HEK293 (cell line): ENCODE measurements at regions of chr17 and their contacts with region 1.

Region 1: GRCh38 chr17:38861399-38861843 is 7.9 kb upstream of the RPL23 start:
- H3K4me3 ChIP-seq: no peak overlapping the region
- H3K27ac ChIP-seq: no peak overlapping the region
- H3K4me1 ChIP-seq: no peaks in the 10 kb centered on the region
- CTCF ChIP-seq: no peak

Region 2: GRCh38 chr17:38848557-38848891 is 12.9 kb before region 1 on chr17:
- CTCF ChIA-PET with region 1: interaction called, 4 read pairs
- POLR2A ChIA-PET with region 1: interaction called, 13 read pairs
- H3K4me3 ChIP-seq: no peak overlapping the region
- H3K27ac ChIP-seq: no peak overlapping the region
- H3K4me1 ChIP-seq: peaks cover 3% of the 10 kb centered on the region
- CTCF ChIP-seq: no peak

Region 3: DNA sequence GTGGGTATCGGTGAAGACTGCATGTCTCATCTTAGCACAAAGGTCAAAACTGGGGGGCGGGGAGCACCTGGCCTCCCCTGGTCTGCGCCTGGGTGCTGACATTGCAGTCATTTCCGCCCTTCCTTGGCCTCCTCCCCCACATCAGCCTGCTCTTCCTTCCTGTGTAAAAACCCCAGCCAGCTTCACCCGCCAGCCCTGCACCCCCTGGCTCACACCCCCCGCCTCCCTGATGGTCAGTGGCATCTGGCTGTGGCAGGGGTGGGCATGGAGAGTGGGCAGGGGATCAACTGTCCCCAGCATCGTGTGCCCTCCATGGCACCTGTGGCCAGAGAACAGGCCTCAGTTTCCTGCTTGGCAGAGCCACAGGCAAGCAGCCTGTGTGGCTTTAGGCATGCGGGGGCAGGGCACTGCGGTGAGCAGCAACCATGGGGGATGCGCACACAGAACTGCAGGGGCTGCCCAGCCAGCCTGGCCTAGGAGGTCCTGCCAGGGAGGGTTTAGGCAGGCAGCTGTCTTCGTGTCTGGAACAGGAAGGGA is 37.5 kb after region 1 on chr17:
- CTCF ChIA-PET with region 1: no interaction called
- POLR2A ChIA-PET with region 1: interaction called, 10 read pairs
- H3K4me3 ChIP-seq: no peak overlapping the region
- H3K27ac ChIP-seq: no peak overlapping the region
- H3K4me1 ChIP-seq: peaks cover 8% of the 10 kb centered on the region; the same call in 1 of the 2 replicates
- CTCF ChIP-seq: no peak

Region 4: GRCh38 chr17:38922538-38923297 is 61.3 kb after region 1 on chr17:
- CTCF ChIA-PET with region 1: no interaction called
- POLR2A ChIA-PET with region 1: no interaction called
- H3K4me3 ChIP-seq: no peak overlapping the region
- H3K27ac ChIP-seq: no peak overlapping the region
- H3K4me1 ChIP-seq: no peaks in the 10 kb centered on the region; the same call in 1 of the 2 replicates
- CTCF ChIP-seq: no peak

Region 5: GRCh38 chr17:38943607-38944006 is 82.2 kb after region 1 on chr17:
- CTCF ChIA-PET with region 1: no interaction called
- POLR2A ChIA-PET with region 1: no interaction called
- H3K4me3 ChIP-seq: no peak overlapping the region
- H3K27ac ChIP-seq: no peak overlapping the region
- H3K4me1 ChIP-seq: no peaks in the 10 kb centered on the region
- CTCF ChIP-seq: no peak

Region 6: DNA sequence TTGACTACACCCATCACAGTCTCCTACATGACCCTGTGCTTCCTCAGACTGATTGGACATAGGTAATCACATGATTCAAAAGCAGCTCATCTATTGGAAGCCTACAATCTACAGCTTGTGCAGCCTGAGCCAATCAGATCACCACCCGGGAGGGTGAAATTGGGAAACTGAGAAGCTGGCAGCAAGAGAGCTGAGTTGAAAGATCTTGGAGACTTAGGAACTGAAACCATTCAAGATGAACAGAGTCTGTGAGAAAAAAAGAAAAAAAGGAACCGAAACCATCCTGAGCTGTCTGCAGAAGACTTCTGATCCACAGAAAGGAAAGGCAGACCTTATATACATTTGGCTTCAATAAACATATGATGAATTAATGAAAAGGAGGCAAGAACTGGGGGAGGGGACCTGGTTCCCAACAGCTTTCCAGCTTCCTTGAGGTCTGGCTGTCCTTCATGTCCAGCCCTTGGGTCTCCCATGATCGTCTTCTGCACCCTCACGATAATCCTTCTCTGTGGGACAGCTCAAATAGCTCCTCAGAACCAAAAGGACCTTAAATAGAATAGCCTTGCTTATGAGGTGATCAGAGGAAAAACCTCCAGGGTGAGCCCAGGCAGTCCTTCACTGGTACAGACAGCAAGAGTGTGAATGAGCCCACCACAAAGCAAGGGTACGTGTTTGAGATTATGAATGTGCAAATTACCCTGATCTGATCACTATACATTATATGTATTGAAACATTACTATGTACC is 257.4 kb after region 1 on chr17:
- CTCF ChIA-PET with region 1: no interaction called
- POLR2A ChIA-PET with region 1: no interaction called
- H3K4me3 ChIP-seq: no peak overlapping the region
- H3K27ac ChIP-seq: no peak overlapping the region
- H3K4me1 ChIP-seq: no peaks in the 10 kb centered on the region
- CTCF ChIP-seq: no peak